Tibial artery (tissue), 4 donors: ENCODE measurements at regions of chr4 and their contacts with region 1.

Region 1: DNA sequence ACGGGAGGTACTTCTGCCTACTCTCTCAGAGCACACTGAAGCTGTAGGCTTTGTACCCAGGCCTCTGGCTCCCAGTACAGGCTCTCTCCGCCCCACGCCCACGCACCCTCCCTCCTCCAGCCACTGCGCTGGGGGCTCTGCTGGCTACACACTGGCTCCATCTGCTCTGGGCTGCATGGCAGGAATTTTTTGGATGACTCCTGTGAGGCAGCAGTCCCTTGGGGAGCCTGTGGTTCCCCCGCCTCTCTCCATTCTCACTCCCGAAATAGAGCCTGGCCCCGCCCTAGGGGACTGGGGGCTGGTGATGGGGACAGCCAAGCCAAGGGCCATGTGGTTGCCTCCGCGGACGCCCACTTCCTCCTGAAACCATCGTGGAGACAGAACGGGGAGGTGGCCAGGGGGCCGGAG is 58.1 kb upstream of the ADRA2C start:
- DNase-seq: peak; percentile 74 to 96
- H3K4me3 ChIP-seq: peak overlapping the region; percentile 45 to 55
- H3K27ac ChIP-seq: peak overlapping the region; percentile 88 to 89
- H3K4me1 ChIP-seq: peaks cover 0 to 65% (median 47%) of the 10 kb centered on the region in 4 donors
- H3K27me3 ChIP-seq: peaks cover 0 to 2% of the 10 kb centered on the region in 2 donors
- CTCF ChIP-seq: no peak

Region 2: GRCh38 chr4:3660086-3660927 is 47.8 kb before region 1 on chr4:
- intact Hi-C with region 1: loop called (anchors 5 kb)
- DNase-seq: no peak
- H3K4me3 ChIP-seq: no peak overlapping the region
- H3K27ac ChIP-seq: peak overlapping the region in 1 of 2 donors; percentile 80
- H3K4me1 ChIP-seq: peaks cover 5 to 43% (median 27%) of the 10 kb centered on the region in 4 donors
- H3K27me3 ChIP-seq: no peaks in the 10 kb centered on the region
- CTCF ChIP-seq: no peak